GM18951 (cell line): ENCODE measurements at regions of chr19 and their contacts with region 1.

Region 1: GRCh38 chr19:42108527-42109389 is 23.5 kb downstream of the POU2F2 start:
- POLR2A ChIP-seq: peak; percentile 38

Region 2: GRCh38 chr19:42283143-42284065 is 174.6 kb after region 1 on chr19:
- in situ Hi-C with region 1: loop called (anchors 25 kb)
- POLR2A ChIP-seq: peak; percentile 67